Natural killer cell (primary cell): ENCODE measurements at regions of chr19 and their contacts with region 1.

Region 1: GRCh38 chr19:55503502-55504251 is 15.4 kb downstream of the SSC5D start:
- DNase-seq: peak; percentile 95 to 96
- ATAC-seq: peak; percentile 94
- H3K4me3 ChIP-seq: peak overlapping the region; percentile 54
- H3K4me3 Mint-ChIP-seq: peak overlapping the region; percentile 95
- H3K27ac ChIP-seq: peak overlapping the region; percentile 87
- H3K27ac Mint-ChIP-seq: peak overlapping the region; percentile 89 to 90
- H3K4me1 ChIP-seq: peaks cover 14% of the 10 kb centered on the region
- H3K4me1 Mint-ChIP-seq: peaks cover 13 to 14% of the 10 kb centered on the region in 2 donors
- H3K27me3 ChIP-seq: no peaks in the 10 kb centered on the region
- H3K27me3 Mint-ChIP-seq: peaks cover 0 to 3% of the 10 kb centered on the region in 2 donors
- CTCF ChIP-seq: peak; percentile 98

Region 2: GRCh38 chr19:55141696-55142095 is 362.0 kb before region 1 on chr19:
- intact Hi-C with region 1: loop called (anchors 1 kb)
- DNase-seq: no peak
- ATAC-seq: no peak
- H3K4me3 ChIP-seq: no peak overlapping the region
- H3K4me3 Mint-ChIP-seq: no peak overlapping the region
- H3K27ac ChIP-seq: no peak overlapping the region
- H3K27ac Mint-ChIP-seq: no peak overlapping the region
- H3K4me1 ChIP-seq: peaks cover 21% of the 10 kb centered on the region
- H3K4me1 Mint-ChIP-seq: peaks cover 0 to 9% of the 10 kb centered on the region in 2 donors
- H3K27me3 ChIP-seq: peaks cover 35% of the 10 kb centered on the region
- H3K27me3 Mint-ChIP-seq: peaks cover 24 to 36% of the 10 kb centered on the region in 2 donors
- CTCF ChIP-seq: no peak

Region 3: DNA sequence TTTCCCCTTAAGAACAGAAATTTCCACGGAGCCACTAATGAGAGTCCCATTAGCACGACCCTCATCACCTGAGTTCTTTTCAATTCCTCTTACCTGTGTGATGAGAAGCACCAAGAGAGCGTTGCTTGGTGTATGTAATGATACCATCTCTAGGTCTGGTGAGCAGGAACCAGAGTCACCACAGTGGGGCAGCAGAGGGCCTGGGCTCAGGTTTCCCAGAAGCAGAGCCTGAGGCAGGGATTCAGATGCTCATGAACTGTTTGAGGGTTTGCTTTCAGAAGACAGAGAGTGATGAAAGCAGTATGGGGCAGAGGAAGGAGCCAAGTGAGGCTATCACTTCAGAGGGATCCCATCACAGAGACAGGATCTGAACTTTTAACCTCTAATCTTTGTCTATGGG is 291.2 kb before region 1 on chr19:
- intact Hi-C with region 1: loop called (anchors 5 kb)
- DNase-seq: peak; percentile 26 to 54
- ATAC-seq: peak; percentile 47 to 70 (median 65)
- H3K4me3 ChIP-seq: no peak overlapping the region
- H3K4me3 Mint-ChIP-seq: no peak overlapping the region
- H3K27ac ChIP-seq: no peak overlapping the region
- H3K27ac Mint-ChIP-seq: no peak overlapping the region
- H3K4me1 ChIP-seq: peaks cover 12% of the 10 kb centered on the region
- H3K4me1 Mint-ChIP-seq: peaks cover 16 to 19% of the 10 kb centered on the region in 2 donors
- H3K27me3 ChIP-seq: no peaks in the 10 kb centered on the region
- H3K27me3 Mint-ChIP-seq: peaks cover 7 to 12% of the 10 kb centered on the region in 2 donors
- CTCF ChIP-seq: no peak

Region 4: GRCh38 chr19:55289117-55289796 is 214.4 kb before region 1 on chr19:
- intact Hi-C with region 1: loop called (anchors 5 kb)
- DNase-seq: no peak
- ATAC-seq: no peak
- H3K4me3 ChIP-seq: no peak overlapping the region
- H3K4me3 Mint-ChIP-seq: no peak overlapping the region
- H3K27ac ChIP-seq: no peak overlapping the region
- H3K27ac Mint-ChIP-seq: no peak overlapping the region
- H3K4me1 ChIP-seq: peaks cover 5% of the 10 kb centered on the region
- H3K4me1 Mint-ChIP-seq: peaks cover 5 to 6% of the 10 kb centered on the region in 2 donors
- H3K27me3 ChIP-seq: no peaks in the 10 kb centered on the region
- H3K27me3 Mint-ChIP-seq: no peaks in the 10 kb centered on the region
- CTCF ChIP-seq: no peak

Region 5: GRCh38 chr19:55467236-55468053 is 36.2 kb before region 1 on chr19:
- intact Hi-C with region 1: loop called (anchors 2 kb)
- DNase-seq: peak; percentile 76 to 79
- ATAC-seq: peak; percentile 93 to 99 (median 98)
- H3K4me3 ChIP-seq: no peak overlapping the region
- H3K4me3 Mint-ChIP-seq: no peak overlapping the region
- H3K27ac ChIP-seq: no peak overlapping the region
- H3K27ac Mint-ChIP-seq: no peak overlapping the region
- H3K4me1 ChIP-seq: peaks cover 5% of the 10 kb centered on the region
- H3K4me1 Mint-ChIP-seq: peaks cover under 1 to 11% of the 10 kb centered on the region in 2 donors
- H3K27me3 ChIP-seq: no peaks in the 10 kb centered on the region
- H3K27me3 Mint-ChIP-seq: peaks cover 0 to 2% of the 10 kb centered on the region in 2 donors
- CTCF ChIP-seq: peak; percentile 98